Dendritic cell treated with granulocyte-macrophage colony-stimulating factor and Interleukin-4, amounts not matched to agents 40 ng/mL and 50 ng/mL, for 4 days (primary cell): ENCODE measurements at regions of chr11 and their contacts with region 1.

Region 1: GRCh38 chr11:84564180-84564866 is 1062.8 kb downstream of the DLG2 start:
- H3K4me3 Mint-ChIP-seq: no peak overlapping the region
- H3K27ac Mint-ChIP-seq: no peak overlapping the region
- H3K4me1 Mint-ChIP-seq: no peaks in the 10 kb centered on the region
- H3K27me3 Mint-ChIP-seq: no peaks in the 10 kb centered on the region

Region 2: DNA sequence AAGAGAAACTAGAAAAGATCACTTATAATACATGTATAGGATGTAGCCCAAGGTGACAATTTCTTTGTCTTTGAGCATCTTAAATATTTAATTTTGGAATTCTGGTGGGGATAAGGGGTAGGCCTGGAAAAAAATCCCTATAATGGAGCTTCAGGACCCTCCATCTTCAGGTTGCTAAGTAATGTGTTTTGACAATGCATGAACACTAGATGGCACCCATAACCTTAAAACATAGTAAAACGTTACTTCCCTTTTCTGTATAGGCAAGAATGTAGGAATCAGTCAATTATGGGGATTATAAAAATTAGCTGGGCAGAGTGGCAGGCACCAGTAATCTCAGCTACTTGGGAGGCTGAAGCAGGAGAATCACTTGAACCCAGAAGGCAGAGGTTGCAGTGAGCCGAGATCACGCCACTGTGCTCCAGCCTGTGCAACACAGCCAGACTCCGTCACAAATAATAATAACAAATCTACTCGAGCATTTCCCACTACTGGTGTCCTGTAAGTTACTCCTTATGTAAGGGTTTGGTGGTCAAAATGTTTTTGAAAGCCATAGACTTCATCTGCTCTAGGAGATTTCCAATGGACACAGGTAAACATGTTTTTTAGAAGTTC is 736.3 kb before region 1 on chr11:
- intact Hi-C with region 1: loop called (anchors 1 kb)
- H3K4me3 Mint-ChIP-seq: no peak overlapping the region
- H3K27ac Mint-ChIP-seq: no peak overlapping the region
- H3K4me1 Mint-ChIP-seq: no peaks in the 10 kb centered on the region
- H3K27me3 Mint-ChIP-seq: no peaks in the 10 kb centered on the region

Region 3: GRCh38 chr11:84524422-84525051 is 39.8 kb before region 1 on chr11:
- intact Hi-C with region 1: no loop called
- H3K4me3 Mint-ChIP-seq: no peak overlapping the region
- H3K27ac Mint-ChIP-seq: no peak overlapping the region
- H3K4me1 Mint-ChIP-seq: no peaks in the 10 kb centered on the region
- H3K27me3 Mint-ChIP-seq: no peaks in the 10 kb centered on the region